ENCODE measurements at regions of chr1 and their contacts with region 1.

Region 1: DNA sequence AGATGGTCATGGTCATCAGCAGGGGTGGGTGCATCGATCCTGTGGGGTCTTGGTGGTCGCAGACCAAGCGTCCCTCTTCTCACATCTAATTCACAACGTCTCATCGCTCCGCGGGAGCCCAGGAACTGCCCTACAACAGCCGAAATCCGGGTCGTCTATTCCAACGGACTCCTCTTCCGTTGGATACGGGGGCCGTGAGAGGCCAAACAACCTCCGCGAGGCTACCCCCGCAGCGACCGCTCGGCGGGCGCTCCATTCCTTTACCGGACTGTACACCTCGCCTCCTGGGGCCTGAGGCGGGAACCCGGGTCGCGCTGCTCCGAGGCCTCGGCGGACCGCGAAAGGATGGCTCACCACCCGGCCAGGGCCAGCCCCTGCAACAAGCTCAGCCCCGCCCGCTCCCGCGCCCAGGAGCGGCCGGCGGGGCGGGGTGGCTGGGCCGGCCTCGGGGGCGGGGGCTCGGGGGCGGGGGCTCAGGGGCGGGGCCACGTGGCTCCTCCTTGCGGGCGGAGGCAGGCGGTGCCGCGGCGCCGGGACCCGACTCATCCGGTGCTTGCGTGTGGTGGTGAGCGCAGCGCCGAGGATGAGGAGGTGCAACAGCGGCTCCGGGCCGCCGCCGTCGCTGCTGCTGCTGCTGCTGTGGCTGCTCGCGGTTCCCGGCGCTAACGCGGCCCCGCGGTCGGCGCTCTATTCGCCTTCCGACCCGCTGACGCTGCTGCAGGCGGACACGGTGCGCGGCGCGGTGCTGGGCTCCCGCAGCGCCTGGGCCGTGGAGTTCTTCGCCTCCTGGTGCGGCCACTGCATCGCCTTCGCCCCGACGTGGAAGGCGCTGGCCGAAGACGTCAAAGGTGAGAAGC is at the start of gene QSOX1:
- DNase-seq: peak; percentile 19
- ATAC-seq: peak; percentile 89
- H3K4me3 ChIP-seq: peak within 1 kb of the TSS; percentile 86
- H3K27ac ChIP-seq: peak within 1 kb of the TSS; percentile 73
- H3K4me1 ChIP-seq: peaks cover 13% of the 10 kb centered on the region; the same call in 1 of the 2 replicates
- H3K27me3 ChIP-seq: no peaks in the 10 kb centered on the region
- CTCF ChIP-seq: peak in 2 of 3 experiments; percentile 3 to 12; a peak in 3 of 6 replicates
- EP300 ChIP-seq: no peak
- POLR2A ChIP-seq: peak; percentile 97
- RAD21 ChIP-seq: no peak
- polyA plus RNA-seq, gene QSOX1: 1.8 to 6.1 TPM

Region 2: GRCh38 chr1:180168786-180169639 is 14.5 kb after region 1 on chr1:
- CTCF ChIA-PET with region 1: interaction called, 16 read pairs
- POLR2A ChIA-PET with region 1: no interaction called
- RAD21 ChIA-PET with region 1: interaction called, 3 read pairs
- SMC1A ChIA-PET with region 1: interaction called, 7 read pairs
- in situ Hi-C with region 1: no loop called
- intact Hi-C with region 1: no loop called
- DNase-seq: no peak
- ATAC-seq: peak; percentile 96
- H3K4me3 ChIP-seq: no peak overlapping the region
- H3K27ac ChIP-seq: no peak overlapping the region
- H3K4me1 ChIP-seq: no peaks in the 10 kb centered on the region
- H3K27me3 ChIP-seq: no peaks in the 10 kb centered on the region
- CTCF ChIP-seq: peak; percentile 56 to 70 (median 58)
- EP300 ChIP-seq: no peak
- POLR2A ChIP-seq: no peak
- RAD21 ChIP-seq: peak; percentile 51

Region 3: GRCh38 chr1:180301135-180301742 is 146.7 kb after region 1 on chr1:
- CTCF ChIA-PET with region 1: no interaction called
- POLR2A ChIA-PET with region 1: no interaction called
- RAD21 ChIA-PET with region 1: no interaction called
- SMC1A ChIA-PET with region 1: no interaction called
- in situ Hi-C with region 1: no loop called
- intact Hi-C with region 1: no loop called
- DNase-seq: no peak
- ATAC-seq: no peak
- H3K4me3 ChIP-seq: no peak overlapping the region
- H3K27ac ChIP-seq: no peak overlapping the region
- H3K4me1 ChIP-seq: no peaks in the 10 kb centered on the region
- H3K27me3 ChIP-seq: no peaks in the 10 kb centered on the region
- CTCF ChIP-seq: no peak
- EP300 ChIP-seq: no peak
- POLR2A ChIP-seq: no peak
- RAD21 ChIP-seq: no peak